Heart right ventricle (tissue), 16 donors: ENCODE measurements at regions of chr1 and their contacts with region 1.

Region 1: GRCh38 chr1:112144733-112145426 is 155.4 kb upstream of the KCND3 start:
- DNase-seq: peak; percentile 18 to 32
- ATAC-seq: peak; percentile 86 to 97 (median 91)
- H3K4me3 ChIP-seq: no peak overlapping the region
- H3K27ac ChIP-seq: peak overlapping the region in 9 of 10 donors; percentile 20 to 74 (median 60)
- H3K4me1 ChIP-seq: peaks cover 0 to 40% (median 9%) of the 10 kb centered on the region in 9 donors
- H3K27me3 ChIP-seq: no peaks in the 10 kb centered on the region
- CTCF ChIP-seq: no peak

Region 2: DNA sequence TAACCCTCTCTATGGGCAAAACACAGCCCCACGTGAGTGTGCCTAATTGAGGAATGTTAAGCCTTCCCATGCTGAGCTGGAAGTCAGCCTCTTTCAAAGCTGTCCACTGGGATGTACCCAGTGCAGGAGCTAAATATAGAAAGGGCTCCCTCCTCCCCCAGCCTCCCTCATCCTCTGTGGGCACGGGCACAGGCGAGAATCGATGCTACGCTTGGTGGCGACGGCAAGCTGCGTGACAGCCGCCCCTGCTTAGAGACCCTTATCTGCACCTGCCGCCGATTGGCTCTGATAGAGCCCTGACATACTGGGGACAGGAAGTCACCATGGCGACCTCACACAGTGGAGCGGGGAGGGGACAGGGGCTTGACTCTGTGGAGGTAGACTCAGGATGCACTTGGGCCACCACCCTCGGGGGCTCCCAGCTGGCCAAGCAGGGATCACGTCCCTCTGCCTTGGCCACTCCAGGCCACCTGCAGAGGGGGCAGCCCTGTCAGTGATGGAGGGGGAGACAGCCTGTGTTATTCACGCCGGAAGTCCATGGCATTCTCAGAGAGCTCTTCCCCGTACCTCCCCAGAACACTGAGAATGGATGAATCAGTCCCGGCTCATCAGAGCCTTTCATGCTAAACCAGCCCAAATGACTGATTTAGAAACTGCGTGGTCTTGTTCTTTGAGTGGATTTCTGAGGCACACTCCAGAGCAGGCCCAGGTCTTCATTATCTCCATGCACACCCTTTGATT is 240.2 kb before region 1 on chr1:
- intact Hi-C with region 1: loop called in 1 of 10 experiments (anchors 10 kb)
- DNase-seq: peak; percentile 24 to 48
- ATAC-seq: peak; percentile 71 to 95 (median 90)
- H3K4me3 ChIP-seq: no peak overlapping the region
- H3K27ac ChIP-seq: peak overlapping the region in 7 of 10 donors; percentile 10 to 72 (median 49)
- H3K4me1 ChIP-seq: peaks cover 0 to 39% (median 19%) of the 10 kb centered on the region in 9 donors
- H3K27me3 ChIP-seq: peaks cover 0 to 5% (median 0%) of the 10 kb centered on the region in 7 donors
- CTCF ChIP-seq: peak in 1 of 9 donors; percentile 27

Region 3: GRCh38 chr1:112058815-112059450 is 85.9 kb before region 1 on chr1:
- intact Hi-C with region 1: loop called in 2 of 10 experiments (anchors 5 to 10 kb)
- DNase-seq: no peak
- ATAC-seq: no peak
- H3K4me3 ChIP-seq: no peak overlapping the region
- H3K27ac ChIP-seq: no peak overlapping the region
- H3K4me1 ChIP-seq: peaks cover 0 to 36% (median 18%) of the 10 kb centered on the region in 9 donors
- H3K27me3 ChIP-seq: peaks cover 0 to under 1% (median 0%) of the 10 kb centered on the region in 7 donors
- CTCF ChIP-seq: no peak

Region 4: DNA sequence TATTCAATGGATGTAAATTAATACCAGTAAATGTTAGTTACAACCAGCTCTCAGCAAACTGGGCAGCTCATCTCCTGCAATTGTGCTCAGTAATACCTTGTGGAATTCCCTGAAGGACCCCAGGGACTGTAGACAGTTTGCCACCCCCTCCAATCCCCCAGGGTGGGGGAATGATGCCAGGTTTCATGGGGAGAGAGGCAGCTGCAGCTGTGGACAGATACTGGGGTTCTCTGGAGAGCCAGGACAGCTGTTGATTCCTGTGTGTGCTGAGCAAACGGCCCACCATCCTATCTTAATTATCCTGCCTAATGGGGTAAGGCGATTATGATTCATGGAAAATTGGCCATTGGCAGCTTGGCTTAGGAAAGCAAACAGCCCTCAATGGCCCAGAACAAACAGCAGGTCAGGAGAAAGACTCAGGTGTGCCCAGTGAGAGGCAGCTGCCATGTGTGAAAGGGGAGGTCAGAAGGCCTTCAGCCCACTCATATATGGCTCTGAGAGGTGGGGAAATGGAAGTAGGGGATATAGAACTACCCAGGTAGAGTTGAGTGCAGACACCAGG is 102.2 kb after region 1 on chr1:
- intact Hi-C with region 1: loop called in 1 of 10 experiments (anchors 10 kb)
- DNase-seq: no peak
- ATAC-seq: no peak
- H3K4me3 ChIP-seq: no peak overlapping the region
- H3K27ac ChIP-seq: no peak overlapping the region
- H3K4me1 ChIP-seq: peaks cover 0 to 25% (median 4%) of the 10 kb centered on the region in 9 donors
- H3K27me3 ChIP-seq: no peaks in the 10 kb centered on the region
- CTCF ChIP-seq: no peak